ENCODE measurements at regions of chr12 and their contacts with region 1.

Region 1: DNA sequence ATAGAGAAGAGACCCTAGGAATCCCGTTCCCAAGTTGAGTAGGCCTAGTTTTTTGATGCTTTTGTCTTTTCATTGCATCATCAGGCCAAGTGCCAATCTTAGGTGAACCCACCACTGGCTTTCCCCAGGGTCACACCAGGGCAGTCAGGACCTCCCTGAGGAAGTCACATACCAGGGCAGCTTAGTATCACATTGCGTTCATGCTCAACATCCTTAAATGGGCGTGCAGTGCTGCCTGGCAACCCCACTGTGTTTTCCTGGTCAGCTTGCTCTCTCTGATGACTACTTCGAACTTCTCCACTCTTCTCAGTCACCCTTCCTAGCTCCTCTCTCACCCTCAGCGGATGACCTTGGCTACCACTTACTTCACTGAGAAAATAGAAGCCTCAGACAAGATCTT is 9.0 kb downstream of the ASIC1 start:
- DNase-seq: no peak
- H3K4me3 ChIP-seq: no peak overlapping the region
- H3K27ac ChIP-seq: peak overlapping the region; percentile 46 to 62 (median 52)
- H3K4me1 ChIP-seq: peaks cover 0 to 27% (median 23%) of the 10 kb centered on the region in 4 donors
- H3K27me3 ChIP-seq: no peaks in the 10 kb centered on the region
- CTCF ChIP-seq: no peak
- EP300 ChIP-seq: no peak
- POLR2A ChIP-seq: no peak

Region 2: DNA sequence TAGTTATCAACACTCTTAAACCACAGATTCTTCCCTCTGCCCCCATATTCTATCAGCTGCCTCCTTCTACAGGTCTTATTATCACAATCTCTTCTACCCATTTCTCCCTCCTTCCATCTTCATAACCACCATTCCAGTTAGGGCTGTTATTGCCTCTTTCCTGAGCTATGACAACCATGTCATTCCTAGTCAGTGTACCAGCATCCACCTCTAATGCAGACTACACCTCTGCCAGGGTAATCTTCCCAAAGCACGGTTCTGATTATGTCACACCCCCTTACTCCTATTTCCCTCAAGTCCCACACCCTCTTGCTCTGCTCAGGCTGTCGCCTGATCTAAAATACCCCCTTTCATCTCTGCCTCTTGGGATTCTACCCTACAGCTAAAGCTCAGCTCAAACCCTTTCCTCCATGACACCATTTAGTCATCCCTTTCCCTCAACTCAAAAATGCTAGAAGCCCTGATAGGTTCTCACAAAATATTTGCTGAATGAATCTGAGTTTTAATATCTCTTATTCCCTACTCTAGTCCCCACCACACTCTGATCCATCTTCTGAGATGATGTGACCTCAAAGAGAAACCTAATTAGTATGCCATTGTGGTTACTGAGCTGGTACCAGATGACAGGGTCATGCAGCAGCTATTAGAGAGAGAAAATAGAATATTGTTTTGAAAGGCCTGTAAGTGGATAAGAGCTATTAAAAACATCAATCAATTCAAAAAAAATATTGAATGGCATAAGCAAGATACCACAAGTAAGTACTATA is 52.9 kb before region 1 on chr12:
- intact Hi-C with region 1: no loop called
- DNase-seq: no peak
- H3K4me3 ChIP-seq: no peak overlapping the region
- H3K27ac ChIP-seq: no peak overlapping the region
- H3K4me1 ChIP-seq: peaks cover 8 to 26% (median 23%) of the 10 kb centered on the region in 4 donors
- H3K27me3 ChIP-seq: no peaks in the 10 kb centered on the region
- CTCF ChIP-seq: no peak
- EP300 ChIP-seq: no peak
- POLR2A ChIP-seq: no peak

Region 3: GRCh38 chr12:50024805-50025186 is 41.6 kb before region 1 on chr12:
- intact Hi-C with region 1: loop called (anchors 5 kb)
- DNase-seq: no peak
- H3K4me3 ChIP-seq: peak overlapping the region; percentile 70 to 83 (median 75)
- H3K27ac ChIP-seq: peak overlapping the region; percentile 62 to 65 (median 64)
- H3K4me1 ChIP-seq: peaks cover 6 to 25% (median 13%) of the 10 kb centered on the region in 4 donors
- H3K27me3 ChIP-seq: no peaks in the 10 kb centered on the region
- CTCF ChIP-seq: no peak
- EP300 ChIP-seq: no peak
- POLR2A ChIP-seq: no peak

Measured in esophagus muscularis mucosa (tissue), 4 donors.